Activated CD4-positive, alpha-beta T cell treated with anti-CD3 and anti-CD28 coated beads, Interleukin-2, amount 10 ng/mL, durations not matched to agents 24 days and 14 days (primary cell): ENCODE measurements at regions of chr15 and their contacts with region 1.

Region 1: DNA sequence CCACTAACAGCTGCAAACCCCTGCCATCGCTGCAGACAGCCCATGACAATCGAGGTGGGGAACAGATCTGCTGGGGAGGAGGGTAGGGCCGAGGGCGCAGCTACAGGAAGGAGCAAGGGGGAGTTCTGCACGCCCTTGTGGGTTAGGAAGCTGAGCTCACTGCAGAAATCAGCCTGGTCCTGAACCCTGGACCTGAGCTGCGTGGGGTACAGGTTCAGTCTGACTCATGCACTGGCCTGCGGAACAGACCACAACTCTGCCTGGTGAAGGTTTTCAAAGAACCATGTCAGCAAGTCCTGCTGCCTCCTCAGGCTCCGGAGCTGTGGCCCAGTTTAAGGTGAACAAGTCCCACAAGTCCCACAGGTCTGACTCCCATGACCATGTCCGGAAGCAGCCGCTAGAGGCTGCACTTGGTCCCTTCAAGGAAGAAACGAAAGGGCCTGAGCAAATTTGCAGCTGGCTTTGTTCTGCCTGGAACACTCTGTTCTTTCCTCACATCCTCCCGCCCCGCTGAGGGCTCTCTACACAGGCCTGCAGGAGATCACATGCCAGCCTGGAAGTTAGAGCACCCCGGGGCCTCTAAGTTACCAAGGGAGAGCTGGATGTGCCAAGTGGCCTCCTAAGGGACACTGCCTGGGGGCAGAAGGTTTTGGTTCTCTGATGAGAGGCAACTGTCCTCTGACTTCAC is 49.4 kb upstream of the AKAP13 start:
- DNase-seq: peak; percentile 92
- H3K4me3 Mint-ChIP-seq: peak overlapping the region; percentile 90
- H3K27ac Mint-ChIP-seq: peak overlapping the region; percentile 94
- H3K4me1 Mint-ChIP-seq: peaks cover 44% of the 10 kb centered on the region
- H3K27me3 Mint-ChIP-seq: no peaks in the 10 kb centered on the region

Region 2: DNA sequence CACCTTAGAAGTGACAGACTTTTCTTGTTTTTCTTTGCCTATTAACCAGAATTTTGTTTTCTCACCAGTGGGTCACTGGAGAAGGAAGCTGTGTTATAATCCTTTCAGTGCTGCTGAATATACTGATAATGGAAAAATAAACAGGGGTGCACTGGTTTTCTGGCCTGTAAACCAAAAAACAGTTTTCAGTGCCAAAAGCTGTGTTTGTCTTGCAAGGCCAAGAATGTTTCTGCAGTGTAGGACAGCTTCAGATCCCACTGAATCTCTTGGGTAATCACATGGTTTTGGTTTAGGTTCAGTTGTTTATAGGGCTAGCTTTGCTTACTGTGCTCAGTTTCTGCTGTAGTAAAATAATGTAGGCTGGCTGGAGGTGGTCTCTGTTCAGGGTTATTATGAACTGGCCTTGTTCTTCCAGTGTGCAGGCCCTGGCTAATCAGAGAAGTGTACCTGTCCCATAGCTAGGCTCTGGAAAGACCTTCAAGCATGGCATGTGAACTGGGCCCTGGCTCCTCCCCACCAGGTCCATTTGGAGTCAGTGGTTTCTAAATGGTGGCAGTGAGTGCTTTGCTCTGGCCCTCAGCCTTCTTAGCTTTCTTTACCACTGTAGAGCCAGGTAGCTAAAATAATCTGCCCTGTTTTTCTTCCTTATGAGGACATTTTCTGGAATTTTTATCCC is 330.7 kb before region 1 on chr15:
- intact Hi-C with region 1: no loop called
- DNase-seq: no peak
- H3K4me3 Mint-ChIP-seq: no peak overlapping the region
- H3K27ac Mint-ChIP-seq: no peak overlapping the region
- H3K4me1 Mint-ChIP-seq: peaks cover 7% of the 10 kb centered on the region
- H3K27me3 Mint-ChIP-seq: no peaks in the 10 kb centered on the region

Region 3: DNA sequence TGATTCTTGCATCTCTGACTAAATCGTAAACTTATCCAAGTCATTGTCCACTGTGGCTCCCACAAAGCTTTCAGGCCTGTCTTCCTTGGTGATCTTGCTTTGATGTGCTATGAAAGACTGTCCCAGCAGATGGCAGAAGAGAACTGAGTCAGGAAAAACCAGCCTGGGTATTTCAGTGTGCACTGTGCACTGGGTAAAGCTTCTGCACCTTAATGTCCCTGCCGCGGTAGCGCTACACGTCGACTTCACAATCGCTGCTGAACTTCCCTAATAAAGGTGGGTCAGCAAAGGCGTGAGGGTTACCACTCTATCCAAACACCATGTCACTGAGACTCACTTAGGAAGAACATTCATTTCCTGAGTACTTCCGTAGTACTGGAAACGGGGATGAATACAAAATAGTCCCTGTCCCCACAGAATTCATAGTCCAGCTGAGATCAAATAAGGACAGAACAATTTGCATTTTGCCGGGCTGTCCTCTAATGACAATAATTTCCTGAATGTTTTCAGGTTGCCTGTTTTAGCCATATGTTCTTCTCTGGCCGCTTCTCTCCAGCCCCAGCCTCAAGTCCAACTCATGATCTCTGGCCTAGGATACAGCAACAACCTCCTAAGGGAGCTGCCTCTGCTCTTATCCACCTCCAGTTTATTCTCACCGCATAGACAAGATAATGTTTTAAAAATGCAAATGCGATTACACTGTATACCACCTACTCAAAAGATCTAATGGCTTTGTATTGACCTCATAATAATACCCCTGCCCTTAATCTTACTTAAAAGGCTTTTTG is 34.2 kb before region 1 on chr15:
- intact Hi-C with region 1: loop called (anchors 1 kb)
- DNase-seq: peak; percentile 93
- H3K4me3 Mint-ChIP-seq: peak overlapping the region; percentile 60
- H3K27ac Mint-ChIP-seq: no peak overlapping the region
- H3K4me1 Mint-ChIP-seq: peaks cover 15% of the 10 kb centered on the region
- H3K27me3 Mint-ChIP-seq: no peaks in the 10 kb centered on the region

Region 4: DNA sequence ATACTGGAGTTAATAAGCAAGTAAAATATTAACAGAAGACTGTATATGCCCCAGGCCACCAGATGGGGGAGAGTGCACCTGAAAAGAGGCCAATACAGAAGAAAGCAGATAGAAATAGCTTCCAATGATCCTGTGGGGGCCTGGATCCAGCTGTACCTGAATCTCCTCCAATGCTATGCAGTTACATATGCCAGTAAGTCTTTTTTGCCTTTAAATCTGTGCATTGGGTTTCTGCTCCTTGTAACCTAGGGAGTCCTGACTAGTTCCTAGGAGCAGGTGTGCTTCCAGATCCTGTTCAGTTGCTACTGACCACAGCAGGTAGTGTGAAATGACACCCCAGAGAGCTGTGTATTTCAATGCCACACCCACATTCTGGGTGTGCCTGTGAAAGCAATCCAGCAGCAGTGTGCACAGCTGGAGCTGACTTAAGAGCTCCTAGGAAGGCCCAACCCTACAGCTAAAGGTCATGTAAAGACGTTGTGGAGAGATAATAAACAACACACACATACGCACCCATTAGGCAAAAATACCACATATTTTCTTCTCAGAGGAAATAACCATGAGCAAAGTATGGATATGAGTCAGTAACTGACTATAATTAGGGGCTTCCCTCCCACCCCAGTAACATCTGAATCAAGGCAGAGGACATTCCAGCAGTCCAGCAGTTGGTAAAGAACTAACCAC is 12.9 kb before region 1 on chr15:
- intact Hi-C with region 1: loop called (anchors 1 kb)
- DNase-seq: peak; percentile 83
- H3K4me3 Mint-ChIP-seq: peak overlapping the region; percentile 64
- H3K27ac Mint-ChIP-seq: peak overlapping the region; percentile 86
- H3K4me1 Mint-ChIP-seq: peaks cover 55% of the 10 kb centered on the region
- H3K27me3 Mint-ChIP-seq: no peaks in the 10 kb centered on the region

Region 5: GRCh38 chr15:85354461-85354860 is 23.4 kb after region 1 on chr15:
- intact Hi-C with region 1: loop called (anchors 2 kb)
- DNase-seq: no peak
- H3K4me3 Mint-ChIP-seq: no peak overlapping the region
- H3K27ac Mint-ChIP-seq: no peak overlapping the region
- H3K4me1 Mint-ChIP-seq: peaks cover 9% of the 10 kb centered on the region
- H3K27me3 Mint-ChIP-seq: peaks cover 3% of the 10 kb centered on the region

Region 6: GRCh38 chr15:85407804-85408746 is 77.0 kb after region 1 on chr15:
- intact Hi-C with region 1: loop called (anchors 1 kb)
- DNase-seq: peak; percentile 76
- H3K4me3 Mint-ChIP-seq: peak overlapping the region; percentile 68
- H3K27ac Mint-ChIP-seq: peak overlapping the region; percentile 95
- H3K4me1 Mint-ChIP-seq: peaks cover 65% of the 10 kb centered on the region
- H3K27me3 Mint-ChIP-seq: no peaks in the 10 kb centered on the region

Region 7: GRCh38 chr15:85475317-85475701 is 144.3 kb after region 1 on chr15:
- intact Hi-C with region 1: no loop called
- DNase-seq: no peak
- H3K4me3 Mint-ChIP-seq: no peak overlapping the region
- H3K27ac Mint-ChIP-seq: no peak overlapping the region
- H3K4me1 Mint-ChIP-seq: peaks cover 37% of the 10 kb centered on the region
- H3K27me3 Mint-ChIP-seq: no peaks in the 10 kb centered on the region

Region 8: GRCh38 chr15:85485956-85486567 is 155.0 kb after region 1 on chr15:
- intact Hi-C with region 1: no loop called
- DNase-seq: peak; percentile 92
- H3K4me3 Mint-ChIP-seq: no peak overlapping the region
- H3K27ac Mint-ChIP-seq: no peak overlapping the region
- H3K4me1 Mint-ChIP-seq: peaks cover 41% of the 10 kb centered on the region
- H3K27me3 Mint-ChIP-seq: no peaks in the 10 kb centered on the region